ENCODE measurements at regions of chr7 and their contacts with region 1.

Region 1: DNA sequence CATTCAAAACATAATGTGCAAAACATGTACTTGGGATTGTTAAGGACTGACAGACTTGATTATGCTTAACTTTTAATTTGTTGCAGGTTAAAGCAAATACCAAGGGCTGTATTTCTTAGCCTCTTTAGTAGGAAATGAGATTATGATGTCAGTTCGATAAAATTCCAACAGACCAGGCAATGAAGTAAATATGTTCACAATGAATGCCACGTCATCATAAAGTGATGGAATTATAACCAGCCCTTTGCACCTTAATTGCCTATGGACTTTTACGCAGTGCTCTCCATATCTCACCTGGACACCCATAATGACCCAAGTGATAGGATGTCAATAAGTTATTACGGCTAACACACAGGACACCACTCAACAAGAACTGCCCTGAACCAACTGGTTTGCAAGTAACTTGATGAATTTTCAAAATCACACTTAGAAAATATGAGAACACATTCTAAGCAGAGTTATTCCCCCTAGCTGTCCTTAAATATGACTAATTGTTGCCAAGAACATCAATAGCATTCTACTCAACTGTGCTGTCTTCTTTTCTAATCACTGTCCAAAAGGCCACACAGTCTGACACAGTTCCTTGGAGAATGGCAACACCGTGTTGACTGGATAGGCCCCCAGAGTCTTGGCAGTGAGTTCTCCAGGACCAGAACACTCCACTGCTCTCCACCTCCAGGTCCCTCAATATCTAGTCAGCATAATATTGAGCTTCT is 115.0 kb downstream of the CHCHD3 start:
- DNase-seq: no peak
- H3K4me3 ChIP-seq: no peak overlapping the region
- H3K4me3 Mint-ChIP-seq: no peak overlapping the region
- H3K27ac Mint-ChIP-seq: no peak overlapping the region
- H3K4me1 ChIP-seq: 0 out of 2 replicates have a peak, but pooled peaks cover 5% of the 10 kb centered on the region
- H3K4me1 Mint-ChIP-seq: peaks cover 9% of the 10 kb centered on the region
- H3K27me3 ChIP-seq: no peaks in the 10 kb centered on the region
- H3K27me3 Mint-ChIP-seq: no peaks in the 10 kb centered on the region
- CTCF ChIP-seq: no peak

Region 2: DNA sequence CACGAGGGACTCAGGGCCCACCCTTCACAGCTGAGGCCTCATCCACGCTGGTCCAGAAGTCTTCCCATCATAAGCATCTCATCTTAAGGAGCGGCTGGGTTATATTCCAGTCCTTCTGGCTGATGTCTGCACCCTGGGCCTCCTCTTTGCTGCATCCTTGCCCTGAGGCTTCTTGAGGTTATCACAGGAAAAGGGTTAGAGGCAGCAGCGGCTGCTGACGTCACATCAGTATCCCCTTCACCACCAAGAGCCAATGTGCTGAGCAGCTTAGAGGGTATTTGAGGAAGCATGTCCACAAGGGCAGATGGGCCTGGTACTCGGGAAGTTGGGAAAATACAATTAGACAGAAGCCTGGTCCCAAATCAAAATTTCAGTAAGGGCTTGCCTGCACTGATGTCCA is 515.8 kb before region 1 on chr7:
- CTCF ChIA-PET with region 1: interaction called, 13 read pairs
- POLR2A ChIA-PET with region 1: no interaction called
- intact Hi-C with region 1: no loop called
- DNase-seq: no peak
- H3K4me3 ChIP-seq: no peak overlapping the region
- H3K4me3 Mint-ChIP-seq: no peak overlapping the region
- H3K27ac Mint-ChIP-seq: no peak overlapping the region
- H3K4me1 ChIP-seq: 0 out of 2 replicates have a peak, but pooled peaks cover 7% of the 10 kb centered on the region
- H3K4me1 Mint-ChIP-seq: no peaks in the 10 kb centered on the region
- H3K27me3 ChIP-seq: no peaks in the 10 kb centered on the region
- H3K27me3 Mint-ChIP-seq: no peaks in the 10 kb centered on the region
- CTCF ChIP-seq: no peak

Region 3: GRCh38 chr7:132677918-132678317 is 289.0 kb before region 1 on chr7:
- CTCF ChIA-PET with region 1: no interaction called
- POLR2A ChIA-PET with region 1: no interaction called
- intact Hi-C with region 1: no loop called
- DNase-seq: no peak
- H3K4me3 ChIP-seq: no peak overlapping the region
- H3K4me3 Mint-ChIP-seq: no peak overlapping the region
- H3K27ac Mint-ChIP-seq: no peak overlapping the region
- H3K4me1 ChIP-seq: no peaks in the 10 kb centered on the region
- H3K4me1 Mint-ChIP-seq: no peaks in the 10 kb centered on the region
- H3K27me3 ChIP-seq: no peaks in the 10 kb centered on the region
- H3K27me3 Mint-ChIP-seq: peaks cover 24% of the 10 kb centered on the region
- CTCF ChIP-seq: no peak

Region 4: GRCh38 chr7:132837529-132837928 is 129.4 kb before region 1 on chr7:
- CTCF ChIA-PET with region 1: no interaction called
- POLR2A ChIA-PET with region 1: no interaction called
- intact Hi-C with region 1: no loop called
- DNase-seq: no peak
- H3K4me3 ChIP-seq: no peak overlapping the region
- H3K4me3 Mint-ChIP-seq: no peak overlapping the region
- H3K27ac Mint-ChIP-seq: no peak overlapping the region
- H3K4me1 ChIP-seq: peaks cover 29% of the 10 kb centered on the region
- H3K4me1 Mint-ChIP-seq: peaks cover 8% of the 10 kb centered on the region
- H3K27me3 ChIP-seq: no peaks in the 10 kb centered on the region
- H3K27me3 Mint-ChIP-seq: no peaks in the 10 kb centered on the region
- CTCF ChIP-seq: no peak

Measured in Caco-2 (cell line).